ENCODE measurements at regions of chr2 and their contacts with region 1.

Region 1: DNA sequence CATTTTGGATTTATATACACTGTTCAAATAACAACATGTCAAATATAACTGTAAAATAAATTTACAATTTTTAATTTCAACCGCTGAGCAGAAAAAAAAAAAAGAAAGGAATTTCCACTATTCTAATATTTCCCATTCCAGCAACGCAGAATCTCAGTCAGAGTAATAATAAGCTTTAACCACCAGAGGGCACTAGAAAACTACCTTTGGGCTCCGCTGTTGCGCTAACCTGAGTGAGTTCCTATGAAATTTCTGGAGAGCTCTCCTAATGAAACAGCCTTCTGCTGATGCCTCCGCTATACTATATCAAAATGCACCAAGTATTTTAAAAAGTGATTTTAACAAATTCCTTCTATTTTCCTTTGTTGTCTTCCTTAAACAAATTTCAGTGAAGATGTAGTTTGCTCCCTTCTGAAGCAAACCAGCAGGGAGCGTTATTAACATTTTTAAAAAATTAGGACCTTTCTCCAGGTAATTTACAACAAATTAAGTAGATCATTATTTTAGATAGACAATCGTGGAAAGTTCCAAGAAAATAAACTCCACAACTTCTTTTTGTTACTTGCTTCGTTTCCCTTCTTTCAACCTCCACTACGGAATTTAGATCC is 23.0 kb downstream of the ERMN start:
- DNase-seq: peak; percentile 33
- H3K4me3 Mint-ChIP-seq: no peak overlapping the region
- H3K27ac Mint-ChIP-seq: no peak overlapping the region
- H3K4me1 Mint-ChIP-seq: peaks cover 14% of the 10 kb centered on the region
- H3K27me3 Mint-ChIP-seq: peaks cover 6% of the 10 kb centered on the region

Region 2: DNA sequence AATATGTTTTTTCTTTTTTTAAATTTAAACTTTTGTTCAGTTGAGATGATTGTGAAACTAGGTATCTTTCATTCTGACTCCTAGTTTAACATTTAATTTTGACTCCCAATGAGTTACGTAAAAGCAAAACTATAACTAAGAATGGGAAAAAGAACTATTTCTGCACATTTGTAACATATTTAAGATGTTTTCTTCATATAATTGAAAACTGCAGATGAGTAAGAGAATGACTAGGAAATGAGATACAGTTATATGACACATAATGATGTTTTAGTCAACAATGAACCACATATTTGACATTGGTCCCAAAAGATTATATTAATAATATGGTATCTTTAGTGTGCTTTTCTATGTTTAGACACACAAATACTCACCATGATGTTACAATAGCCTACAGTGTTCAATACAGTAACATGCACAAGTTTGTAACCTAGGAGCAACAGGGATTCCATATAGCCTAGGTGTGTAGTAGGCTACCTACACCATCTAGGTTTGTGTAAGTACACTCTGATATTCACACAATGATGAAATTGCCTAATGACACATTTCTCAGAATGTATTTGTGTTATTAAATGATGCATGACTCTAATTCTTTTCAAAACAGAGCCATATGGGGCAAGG is 10.4 kb after region 1 on chr2:
- CTCF ChIA-PET with region 1: interaction called, 22 read pairs
- POLR2A ChIA-PET with region 1: no interaction called
- intact Hi-C with region 1: no loop called
- DNase-seq: no peak
- H3K4me3 Mint-ChIP-seq: no peak overlapping the region
- H3K27ac Mint-ChIP-seq: no peak overlapping the region
- H3K4me1 Mint-ChIP-seq: peaks cover 34% of the 10 kb centered on the region
- H3K27me3 Mint-ChIP-seq: peaks cover 2% of the 10 kb centered on the region

Region 3: DNA sequence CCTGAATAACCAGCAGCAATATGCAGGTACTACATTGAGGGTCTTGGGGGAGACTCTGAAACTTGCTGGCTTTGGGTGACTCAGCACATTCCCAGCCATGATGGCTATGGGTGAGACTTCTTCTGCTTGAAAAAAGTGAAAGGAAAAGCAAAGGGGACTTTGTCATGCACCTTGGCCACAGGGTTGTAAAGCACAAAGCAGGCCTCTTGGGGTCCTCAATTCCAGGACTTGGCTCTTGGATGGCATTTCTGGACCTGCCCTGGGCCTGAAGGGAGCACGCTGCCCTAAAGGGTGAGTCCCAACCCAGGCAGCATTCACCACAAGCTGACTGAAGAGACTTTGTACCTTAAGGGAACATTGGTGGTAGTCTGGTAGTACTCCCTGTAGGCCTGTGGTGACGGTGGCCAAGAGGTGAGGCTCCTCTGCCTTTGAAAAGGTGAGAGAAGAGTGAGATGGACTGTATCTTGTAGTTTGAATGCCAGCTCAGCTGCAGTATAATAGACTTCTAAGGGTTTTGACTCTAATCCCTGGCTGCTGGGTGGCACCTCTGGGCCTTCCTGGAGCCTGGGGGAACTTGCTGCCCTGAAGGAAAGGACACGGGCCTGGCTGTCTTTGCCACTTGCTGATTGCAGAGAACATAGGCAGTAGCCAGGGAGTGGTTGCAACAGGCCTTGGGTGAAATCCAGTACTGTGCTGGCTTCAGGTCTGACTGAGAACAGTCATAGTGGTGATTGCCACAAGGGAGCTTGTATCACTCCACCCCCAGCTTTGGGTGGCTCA is 177.8 kb after region 1 on chr2:
- CTCF ChIA-PET with region 1: interaction called, 147 read pairs
- POLR2A ChIA-PET with region 1: no interaction called
- intact Hi-C with region 1: no loop called
- DNase-seq: peak; percentile 82
- H3K4me3 Mint-ChIP-seq: peak overlapping the region; percentile 54
- H3K27ac Mint-ChIP-seq: peak overlapping the region; percentile 95
- H3K4me1 Mint-ChIP-seq: peaks cover 68% of the 10 kb centered on the region
- H3K27me3 Mint-ChIP-seq: no peaks in the 10 kb centered on the region

Region 4: DNA sequence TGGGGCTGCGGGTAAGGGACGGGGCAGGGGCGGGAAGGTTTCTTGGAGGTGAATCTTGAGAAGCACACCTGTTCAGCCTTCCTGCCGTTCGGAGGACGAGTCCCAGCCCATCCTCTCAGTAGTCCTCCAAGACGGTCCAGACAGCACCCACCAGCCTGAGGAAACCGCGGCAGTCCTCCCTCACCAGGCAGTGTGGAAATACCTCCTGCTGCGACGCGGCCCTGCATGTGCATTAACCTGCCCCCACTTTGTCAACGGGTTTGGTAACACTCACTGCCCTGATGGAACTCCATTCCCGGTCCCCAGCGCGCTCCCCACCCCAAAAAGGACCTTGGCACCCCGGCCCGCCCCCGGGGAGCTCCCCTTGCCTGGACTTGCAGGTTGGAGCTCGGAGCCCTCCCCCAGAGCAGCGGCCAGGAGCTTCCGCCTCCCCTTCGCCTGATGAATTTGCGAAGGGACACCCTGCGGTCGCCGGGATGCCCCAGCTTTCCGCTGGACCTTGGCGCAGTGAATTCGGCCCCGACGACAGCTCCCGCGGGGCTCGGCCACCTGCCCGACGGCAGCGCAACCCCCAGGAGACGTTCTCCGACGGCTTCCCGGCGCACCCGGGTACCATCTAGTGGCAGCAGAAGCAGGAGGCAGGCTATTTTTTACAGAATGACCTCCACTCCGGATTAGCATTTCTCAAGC is 294.5 kb after region 1 on chr2:
- CTCF ChIA-PET with region 1: interaction called, 62 read pairs
- POLR2A ChIA-PET with region 1: no interaction called
- intact Hi-C with region 1: loop called (anchors 1 kb)
- DNase-seq: peak; percentile 72
- H3K4me3 Mint-ChIP-seq: peak overlapping the region; percentile 61
- H3K27ac Mint-ChIP-seq: no peak overlapping the region
- H3K4me1 Mint-ChIP-seq: peaks cover 11% of the 10 kb centered on the region
- H3K27me3 Mint-ChIP-seq: peaks cover 4% of the 10 kb centered on the region

Region 5: DNA sequence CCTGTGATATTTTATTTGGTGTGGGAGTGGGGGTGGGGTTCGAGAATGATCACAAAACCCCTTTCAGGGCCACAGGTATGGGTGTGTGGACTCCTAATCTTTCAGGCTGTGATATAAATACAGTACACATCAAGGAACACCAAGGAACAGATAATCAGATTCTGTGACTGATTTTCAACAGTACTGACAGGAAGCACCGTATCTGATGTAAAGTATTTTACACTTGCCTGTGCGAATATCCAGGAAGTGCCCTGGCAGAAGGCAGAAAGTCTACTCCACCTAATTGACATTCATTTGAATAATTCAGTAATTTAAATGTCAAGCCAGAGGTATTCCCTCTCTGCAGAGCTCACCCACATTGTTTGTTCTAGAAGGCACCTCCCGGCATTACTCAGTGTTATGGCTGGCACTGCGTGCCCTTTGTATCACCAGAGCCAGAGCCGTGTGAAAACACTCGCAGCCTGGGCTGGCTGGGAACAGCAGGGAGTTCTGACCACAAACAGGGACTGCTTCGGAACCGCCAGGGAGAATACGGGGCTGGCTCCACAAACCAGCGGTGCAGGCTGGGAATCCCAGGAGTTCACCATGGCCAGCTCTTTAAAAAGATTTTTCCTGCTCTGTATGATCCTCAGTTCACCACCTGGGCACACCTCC is 481.7 kb after region 1 on chr2:
- CTCF ChIA-PET with region 1: interaction called, 7 read pairs
- POLR2A ChIA-PET with region 1: no interaction called
- intact Hi-C with region 1: loop called (anchors 10 kb)
- DNase-seq: peak; percentile 26
- H3K4me3 Mint-ChIP-seq: no peak overlapping the region
- H3K27ac Mint-ChIP-seq: peak overlapping the region; percentile 61
- H3K4me1 Mint-ChIP-seq: peaks cover 45% of the 10 kb centered on the region
- H3K27me3 Mint-ChIP-seq: no peaks in the 10 kb centered on the region